B cell (primary cell): ENCODE measurements at regions of chr5 and their contacts with region 1.

Region 1: GRCh38 chr5:151252762-151253604 is at the start of gene GM2A:
- DNase-seq: peak; percentile 99
- ATAC-seq: peak; percentile 83
- H3K4me3 ChIP-seq: peak within 1 kb of the TSS; percentile 74 to 96 (median 89)
- H3K4me3 Mint-ChIP-seq: peak within 1 kb of the TSS; percentile 95
- H3K27ac ChIP-seq: peak within 1 kb of the TSS; percentile 70 to 90
- H3K27ac Mint-ChIP-seq: peak within 1 kb of the TSS; percentile 88
- H3K4me1 ChIP-seq: peaks cover 48 to 54% of the 10 kb centered on the region in 2 donors
- H3K4me1 Mint-ChIP-seq: peaks cover 52% of the 10 kb centered on the region
- H3K27me3 ChIP-seq: no peaks in the 10 kb centered on the region
- H3K27me3 Mint-ChIP-seq: no peaks in the 10 kb centered on the region
- CTCF ChIP-seq: no peak
- total RNA-seq, gene GM2A: 82.7 and 89.3 TPM in 2 replicates

Region 2: GRCh38 chr5:149960272-149961185 is 1292.5 kb before region 1 on chr5 and contains the start of gene SLC26A2:
- CTCF ChIA-PET with region 1: no interaction called
- POLR2A ChIA-PET with region 1: no interaction called
- intact Hi-C with region 1: loop called (anchors 10 kb)
- DNase-seq: peak; percentile 95
- ATAC-seq: peak; percentile 97
- H3K4me3 ChIP-seq: peak within 1 kb of the TSS; percentile 54 to 85 (median 79)
- H3K4me3 Mint-ChIP-seq: peak within 1 kb of the TSS; percentile 93
- H3K27ac ChIP-seq: peak within 1 kb of the TSS; percentile 74 to 81
- H3K27ac Mint-ChIP-seq: peak within 1 kb of the TSS; percentile 96
- H3K4me1 ChIP-seq: peaks cover 20% of the 10 kb centered on the region in 2 donors
- H3K4me1 Mint-ChIP-seq: peaks cover 29% of the 10 kb centered on the region
- H3K27me3 ChIP-seq: no peaks in the 10 kb centered on the region
- H3K27me3 Mint-ChIP-seq: no peaks in the 10 kb centered on the region
- CTCF ChIP-seq: no peak
- total RNA-seq, gene SLC26A2: 13.2 and 13.5 TPM in 2 replicates

Region 3: GRCh38 chr5:150700594-150701293 is 552.2 kb before region 1 on chr5 and contains the start of gene RBM22:
- CTCF ChIA-PET with region 1: no interaction called
- POLR2A ChIA-PET with region 1: interaction called, 3 read pairs
- intact Hi-C with region 1: loop called (anchors 5 kb)
- DNase-seq: peak; percentile 94
- ATAC-seq: peak; percentile 96
- H3K4me3 ChIP-seq: peak within 1 kb of the TSS; percentile 65 to 100 (median 99)
- H3K4me3 Mint-ChIP-seq: no peak within 1 kb of the TSS
- H3K27ac ChIP-seq: peak within 1 kb of the TSS; percentile 96 to 97
- H3K27ac Mint-ChIP-seq: no peak within 1 kb of the TSS
- H3K4me1 ChIP-seq: peaks cover 15 to 17% of the 10 kb centered on the region in 2 donors
- H3K4me1 Mint-ChIP-seq: peaks cover 8% of the 10 kb centered on the region
- H3K27me3 ChIP-seq: no peaks in the 10 kb centered on the region
- H3K27me3 Mint-ChIP-seq: no peaks in the 10 kb centered on the region
- CTCF ChIP-seq: peak; percentile 84
- total RNA-seq, gene RBM22: 88.4 and 89.4 TPM in 2 replicates

Region 4: GRCh38 chr5:151115274-151115905 is 137.6 kb before region 1 on chr5:
- CTCF ChIA-PET with region 1: interaction called, 21 read pairs
- POLR2A ChIA-PET with region 1: interaction called, 4 read pairs
- intact Hi-C with region 1: no loop called
- DNase-seq: peak; percentile 78
- ATAC-seq: peak; percentile 88
- H3K4me3 ChIP-seq: no peak overlapping the region
- H3K4me3 Mint-ChIP-seq: no peak overlapping the region
- H3K27ac ChIP-seq: peak overlapping the region in 1 of 2 donors; percentile 51
- H3K27ac Mint-ChIP-seq: peak overlapping the region; percentile 56
- H3K4me1 ChIP-seq: peaks cover 4 to 11% of the 10 kb centered on the region in 2 donors
- H3K4me1 Mint-ChIP-seq: peaks cover 23% of the 10 kb centered on the region
- H3K27me3 ChIP-seq: no peaks in the 10 kb centered on the region
- H3K27me3 Mint-ChIP-seq: no peaks in the 10 kb centered on the region
- CTCF ChIP-seq: peak; percentile 98

Region 5: GRCh38 chr5:151191659-151192058 is 61.3 kb before region 1 on chr5:
- CTCF ChIA-PET with region 1: interaction called, 4 read pairs
- POLR2A ChIA-PET with region 1: interaction called, 13 read pairs
- intact Hi-C with region 1: loop called (anchors 1 kb)
- DNase-seq: no peak
- ATAC-seq: no peak
- H3K4me3 ChIP-seq: peak overlapping the region in 1 of 5 experiments; percentile 8
- H3K4me3 Mint-ChIP-seq: peak overlapping the region; percentile 16
- H3K27ac ChIP-seq: peak overlapping the region; percentile 19 to 78
- H3K27ac Mint-ChIP-seq: peak overlapping the region; percentile 6
- H3K4me1 ChIP-seq: peaks cover 47 to 67% of the 10 kb centered on the region in 2 donors
- H3K4me1 Mint-ChIP-seq: peaks cover 76% of the 10 kb centered on the region
- H3K27me3 ChIP-seq: no peaks in the 10 kb centered on the region
- H3K27me3 Mint-ChIP-seq: no peaks in the 10 kb centered on the region
- CTCF ChIP-seq: no peak

Region 6: DNA sequence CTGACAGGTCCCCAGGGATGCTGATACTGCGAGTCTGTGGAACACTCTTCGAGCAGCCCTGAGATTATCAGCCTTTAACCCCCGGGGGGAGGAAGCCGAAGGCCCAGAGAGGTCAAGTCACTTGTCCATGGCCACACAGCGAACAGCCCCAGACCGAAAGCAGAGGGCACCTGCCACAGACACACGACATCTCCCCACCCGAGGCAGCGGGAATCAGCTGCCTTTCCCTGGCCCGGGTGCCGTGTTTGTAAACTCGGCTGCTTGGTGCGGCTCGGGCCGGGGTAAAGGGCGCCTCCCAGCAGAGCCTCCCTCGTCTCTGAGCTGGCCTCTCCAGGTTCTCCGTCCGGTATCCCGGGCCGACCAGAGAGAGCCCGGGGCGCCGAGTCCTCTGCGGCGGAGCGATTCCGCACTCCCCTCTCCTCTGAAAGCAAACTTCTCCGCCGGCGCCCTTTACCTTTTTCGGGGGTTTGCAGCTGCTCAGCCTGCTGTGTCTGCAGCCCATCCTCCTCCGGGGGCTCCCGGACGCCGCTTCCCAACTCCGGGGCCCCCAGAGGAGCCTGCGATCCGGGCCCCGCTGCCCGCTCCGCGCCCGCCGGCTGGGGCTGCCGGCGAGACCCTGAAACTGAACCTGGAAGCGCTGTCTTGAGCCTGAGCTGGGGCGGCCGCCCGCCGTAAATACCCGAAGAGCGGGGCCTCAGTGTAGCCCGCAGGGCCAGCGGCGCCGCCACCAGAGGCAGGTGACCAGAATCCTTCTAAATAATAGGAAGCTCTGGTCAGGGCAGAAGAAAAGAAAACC is 29.3 kb before region 1 on chr5 and contains the start of gene CCDC69:
- CTCF ChIA-PET with region 1: interaction called, 5 read pairs
- POLR2A ChIA-PET with region 1: interaction called, 15 read pairs
- intact Hi-C with region 1: loop called (anchors 1 kb)
- DNase-seq: peak; percentile 75
- ATAC-seq: peak; percentile 42
- H3K4me3 ChIP-seq: peak within 1 kb of the TSS; percentile 70 to 86 (median 80)
- H3K4me3 Mint-ChIP-seq: peak within 1 kb of the TSS; percentile 88
- H3K27ac ChIP-seq: peak within 1 kb of the TSS; percentile 94 to 99
- H3K27ac Mint-ChIP-seq: peak within 1 kb of the TSS; percentile 92
- H3K4me1 ChIP-seq: peaks cover 64 to 75% of the 10 kb centered on the region in 2 donors
- H3K4me1 Mint-ChIP-seq: peaks cover 71% of the 10 kb centered on the region
- H3K27me3 ChIP-seq: no peaks in the 10 kb centered on the region
- H3K27me3 Mint-ChIP-seq: no peaks in the 10 kb centered on the region
- CTCF ChIP-seq: no peak
- total RNA-seq, gene CCDC69: 125 and 129 TPM in 2 replicates

Region 7: DNA sequence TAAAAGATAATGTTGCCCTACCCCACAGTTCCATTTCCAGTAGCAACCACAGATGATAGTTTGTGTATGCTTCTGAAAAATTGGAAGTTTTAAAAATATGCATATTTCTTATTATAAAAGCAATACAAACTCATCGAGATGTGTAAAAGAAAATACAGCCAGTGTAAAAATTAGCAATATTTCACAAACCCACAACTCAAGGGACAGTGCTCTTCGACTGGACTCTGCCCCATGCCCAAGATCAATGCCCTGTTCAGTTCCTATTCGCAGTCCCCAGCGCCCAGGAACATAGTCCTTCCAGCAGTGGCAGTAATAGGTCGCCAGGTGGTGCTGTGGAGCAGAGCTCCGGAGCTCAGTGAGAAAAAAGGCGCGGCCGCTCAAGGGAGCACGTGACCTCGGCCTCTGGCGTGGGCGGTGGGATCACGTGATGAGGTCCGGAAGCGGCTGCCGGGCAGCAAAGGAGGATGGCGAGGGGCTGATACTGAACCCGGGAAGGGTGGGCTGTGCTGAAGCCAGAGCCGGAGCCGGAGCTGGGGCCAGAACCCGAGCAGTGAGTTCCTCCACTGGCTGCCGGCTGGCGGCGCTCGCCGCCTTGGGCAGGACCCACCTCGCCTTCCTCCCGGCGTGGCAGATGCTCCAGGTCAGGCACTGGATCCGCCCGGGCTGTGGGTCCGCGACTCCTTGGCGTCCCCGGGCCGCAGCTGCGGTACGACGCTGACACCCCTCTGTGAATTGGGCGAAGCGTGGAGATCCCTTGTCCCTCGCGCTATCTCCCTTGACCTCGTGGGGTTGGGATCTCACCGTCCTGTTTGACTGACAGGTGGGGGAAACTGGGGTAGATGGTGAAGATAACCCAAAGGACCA is 194.4 kb after region 1 on chr5 and contains the start of gene SLC36A1:
- CTCF ChIA-PET with region 1: interaction called, 4 read pairs
- POLR2A ChIA-PET with region 1: no interaction called
- intact Hi-C with region 1: loop called (anchors 5 kb)
- DNase-seq: peak; percentile 95
- ATAC-seq: peak; percentile 98
- H3K4me3 ChIP-seq: peak within 1 kb of the TSS; percentile 77 to 94 (median 84)
- H3K4me3 Mint-ChIP-seq: peak within 1 kb of the TSS; percentile 93
- H3K27ac ChIP-seq: peak within 1 kb of the TSS; percentile 66 to 80
- H3K27ac Mint-ChIP-seq: peak within 1 kb of the TSS; percentile 97
- H3K4me1 ChIP-seq: peaks cover 11 to 12% of the 10 kb centered on the region in 2 donors
- H3K4me1 Mint-ChIP-seq: peaks cover 25% of the 10 kb centered on the region
- H3K27me3 ChIP-seq: peaks cover 0 to 7% (median 2%) of the 10 kb centered on the region in 4 experiments
- H3K27me3 Mint-ChIP-seq: peaks cover 20% of the 10 kb centered on the region
- CTCF ChIP-seq: peak; percentile 95
- total RNA-seq, gene SLC36A1: 12.9 and 15.1 TPM in 2 replicates